ENCODE measurements at regions of chr20 and their contacts with region 1.

Region 1: DNA sequence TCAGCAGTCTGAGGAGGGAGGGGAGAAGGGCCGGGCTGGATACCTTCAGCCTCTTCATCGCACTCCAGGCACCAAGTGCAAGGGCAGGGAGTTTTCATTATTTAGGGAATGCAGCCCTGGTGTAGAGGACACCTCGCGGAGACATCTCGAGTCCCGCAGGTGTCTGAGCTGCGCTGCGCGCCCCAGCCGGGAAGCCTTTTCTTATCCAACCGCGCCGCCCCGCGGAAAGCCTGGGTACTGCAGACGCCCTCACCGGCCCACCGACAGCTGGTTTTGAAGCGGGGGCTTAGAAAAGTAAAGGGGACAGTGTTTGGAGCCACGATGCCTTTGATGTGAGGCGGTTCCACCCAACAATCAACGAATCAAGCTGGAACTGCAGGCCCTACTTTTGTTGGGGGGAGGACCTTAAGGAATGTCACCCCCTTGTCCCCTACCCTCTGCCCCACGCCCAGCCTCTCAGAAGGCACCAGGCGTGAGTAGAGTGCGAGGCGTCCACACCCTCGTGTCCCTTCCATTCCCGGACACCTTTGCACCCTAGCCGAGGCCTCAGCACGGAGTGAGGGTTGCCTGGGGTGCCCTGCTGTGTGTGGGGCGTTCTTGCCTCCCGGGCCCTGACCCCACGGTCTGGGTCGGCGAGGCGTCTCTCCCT is 8.6 kb downstream of the NKX2-2 start:
- DNase-seq: peak; percentile 20 to 32
- ATAC-seq: peak in 1 of 2 donors; percentile 56
- H3K4me3 ChIP-seq: peak overlapping the region in 3 of 4 donors; percentile 27 to 51 (median 40)
- H3K27ac ChIP-seq: no peak overlapping the region
- H3K4me1 ChIP-seq: peaks cover 13 to 18% of the 10 kb centered on the region in 2 donors
- H3K27me3 ChIP-seq: peaks cover 76 to 93% (median 81%) of the 10 kb centered on the region in 3 donors
- CTCF ChIP-seq: peak; percentile 83 to 97 (median 92)
- POLR2A ChIP-seq: no peak

Region 2: DNA sequence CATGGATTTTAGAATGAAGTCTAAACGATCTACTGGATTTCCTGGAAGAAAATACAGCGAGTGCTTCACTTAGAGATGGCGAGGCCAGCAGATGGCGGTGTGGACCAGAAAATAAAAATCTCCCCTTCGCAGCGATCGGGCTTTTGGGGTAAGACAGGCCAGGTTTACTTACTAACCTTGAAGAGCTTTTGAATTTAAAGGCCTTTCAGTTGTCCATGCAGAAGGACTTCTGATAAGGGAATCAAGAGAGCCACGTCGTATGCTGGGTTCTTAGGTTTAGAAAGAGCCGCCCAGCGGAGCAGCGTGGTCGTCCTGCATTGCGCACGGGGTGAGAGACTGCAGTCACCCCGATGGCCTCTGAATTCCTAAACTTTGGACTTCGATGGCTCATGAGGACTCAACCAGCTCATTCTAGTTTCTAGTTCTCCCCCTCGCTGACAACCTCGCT is 667.7 kb before region 1 on chr20:
- in situ Hi-C with region 1: loop called in 1 of 4 experiments (anchors 10 kb)
- intact Hi-C with region 1: loop called (anchors 2 kb)
- DNase-seq: peak in 1 of 2 donors; percentile 22
- ATAC-seq: peak; percentile 42 to 68
- H3K4me3 ChIP-seq: peak overlapping the region; percentile 21 to 39 (median 35)
- H3K27ac ChIP-seq: no peak overlapping the region
- H3K4me1 ChIP-seq: peaks cover 0 to 7% of the 10 kb centered on the region in 2 donors
- H3K27me3 ChIP-seq: no peaks in the 10 kb centered on the region
- CTCF ChIP-seq: peak; percentile 55 to 73 (median 64)
- POLR2A ChIP-seq: no peak

Region 3: GRCh38 chr20:21099751-21100577 is 405.3 kb before region 1 on chr20:
- in situ Hi-C with region 1: no loop called
- intact Hi-C with region 1: loop called (anchors 10 kb)
- DNase-seq: no peak
- ATAC-seq: no peak
- H3K4me3 ChIP-seq: peak overlapping the region; percentile 43 to 59 (median 46)
- H3K27ac ChIP-seq: peak overlapping the region in 1 of 4 donors; percentile 55
- H3K4me1 ChIP-seq: peaks cover 16 to 42% of the 10 kb centered on the region in 2 donors
- H3K27me3 ChIP-seq: peaks cover 66 to 83% (median 79%) of the 10 kb centered on the region in 3 donors
- CTCF ChIP-seq: no peak
- POLR2A ChIP-seq: no peak

Region 4: DNA sequence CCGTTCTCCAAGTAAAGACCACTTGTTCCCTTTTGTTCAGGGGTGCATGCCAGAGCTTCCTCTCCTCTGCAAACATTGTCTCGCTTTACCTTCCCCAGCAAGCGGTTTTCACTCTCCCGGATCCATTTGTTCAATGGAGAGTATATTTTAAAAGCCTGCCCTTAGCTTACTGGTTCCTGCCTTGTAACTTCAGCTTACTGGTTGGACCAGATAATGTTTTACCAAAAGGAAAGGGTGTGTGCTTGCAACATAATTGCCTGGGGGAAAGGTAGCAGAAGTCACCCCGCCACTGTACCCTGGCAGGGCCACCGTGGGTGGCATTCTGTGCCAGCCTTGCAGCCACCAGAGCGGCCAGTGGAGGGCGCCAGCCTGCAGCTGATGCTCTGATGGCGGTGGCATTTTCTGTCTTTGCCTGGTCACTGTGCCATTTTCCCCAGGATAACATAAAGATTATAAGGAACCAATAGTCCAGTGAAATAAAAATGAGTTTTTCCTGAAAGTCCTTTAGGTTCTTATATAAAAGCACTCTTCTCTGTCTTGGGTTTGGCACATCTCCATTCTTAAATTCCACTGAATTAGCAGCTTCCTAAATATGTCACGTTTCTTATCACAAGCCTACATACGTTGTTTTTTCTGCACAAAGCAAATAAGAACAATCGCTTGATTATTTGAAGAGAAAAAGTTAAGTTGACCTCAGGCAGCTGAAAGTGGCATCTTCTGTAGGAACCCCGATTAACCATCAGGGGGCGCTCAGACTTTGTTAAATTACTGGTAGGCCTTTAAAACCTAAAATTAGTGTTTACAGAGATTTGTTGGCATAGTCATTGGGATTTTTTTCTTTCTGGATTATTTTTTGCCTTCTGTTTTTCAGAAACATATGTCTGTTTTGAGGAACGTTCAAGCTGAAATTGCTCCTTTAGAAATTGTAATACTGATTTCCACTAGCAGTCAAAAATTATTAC is 269.5 kb before region 1 on chr20:
- in situ Hi-C with region 1: loop called (anchors 5 to 10 kb)
- intact Hi-C with region 1: loop called (anchors 1 kb)
- DNase-seq: peak; percentile 6 to 25
- ATAC-seq: peak in 1 of 2 donors; percentile 72
- H3K4me3 ChIP-seq: no peak overlapping the region
- H3K27ac ChIP-seq: no peak overlapping the region
- H3K4me1 ChIP-seq: no peaks in the 10 kb centered on the region
- H3K27me3 ChIP-seq: no peaks in the 10 kb centered on the region
- CTCF ChIP-seq: peak; percentile 50 to 75 (median 57)
- POLR2A ChIP-seq: no peak

Region 5: GRCh38 chr20:21548390-21549035 is 43.2 kb after region 1 on chr20:
- in situ Hi-C with region 1: no loop called
- intact Hi-C with region 1: no loop called
- DNase-seq: no peak
- ATAC-seq: no peak
- H3K4me3 ChIP-seq: no peak overlapping the region
- H3K27ac ChIP-seq: no peak overlapping the region
- H3K4me1 ChIP-seq: no peaks in the 10 kb centered on the region
- H3K27me3 ChIP-seq: peaks cover 0 to 5% (median 0%) of the 10 kb centered on the region in 3 donors
- CTCF ChIP-seq: no peak
- POLR2A ChIP-seq: no peak